Gastrocnemius medialis (tissue), 4 donors: ENCODE measurements at regions of chr1 and their contacts with region 1.

Region 1: DNA sequence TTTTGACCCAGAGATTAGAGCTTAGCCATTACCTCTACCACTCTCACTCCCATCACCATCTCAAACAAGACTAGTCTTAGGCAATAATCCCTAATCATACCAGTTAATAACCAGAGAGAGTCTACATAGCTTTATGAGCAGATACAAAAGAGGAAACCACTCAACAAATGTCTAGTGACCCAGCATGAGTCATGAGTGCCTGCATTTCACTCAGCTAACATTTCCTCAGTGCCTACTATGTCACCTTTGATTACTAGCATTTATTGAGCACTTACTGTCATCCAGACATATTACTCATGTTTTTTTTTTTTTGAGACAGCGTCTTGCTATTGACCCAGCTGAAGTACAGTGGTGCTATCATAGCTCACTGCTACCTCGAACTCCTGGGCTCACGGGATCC is 35.9 kb upstream of the GALNT2 start:
- DNase-seq: no peak
- ATAC-seq: no peak
- H3K4me3 ChIP-seq: no peak overlapping the region
- H3K27ac ChIP-seq: no peak overlapping the region
- H3K4me1 ChIP-seq: no peaks in the 10 kb centered on the region
- H3K27me3 ChIP-seq: no peaks in the 10 kb centered on the region
- CTCF ChIP-seq: no peak
- POLR2A ChIP-seq: no peak

Region 2: GRCh38 chr1:229979993-229980392 is 51.1 kb before region 1 on chr1:
- in situ Hi-C with region 1: no loop called
- intact Hi-C with region 1: loop called (anchors 10 kb)
- DNase-seq: no peak
- ATAC-seq: no peak
- H3K4me3 ChIP-seq: no peak overlapping the region
- H3K27ac ChIP-seq: no peak overlapping the region
- H3K4me1 ChIP-seq: no peaks in the 10 kb centered on the region
- H3K27me3 ChIP-seq: no peaks in the 10 kb centered on the region
- CTCF ChIP-seq: no peak
- POLR2A ChIP-seq: no peak